ENCODE measurements at regions of chr19 and their contacts with region 1.

Region 1: GRCh38 chr19:33927789-33928457 is 131.3 kb downstream of the KCTD15 start:
- DNase-seq: peak; percentile 18
- ATAC-seq: peak; percentile 74
- H3K4me3 Mint-ChIP-seq: peak overlapping the region; percentile 44
- H3K27ac Mint-ChIP-seq: peak overlapping the region; percentile 95
- H3K4me1 Mint-ChIP-seq: peaks cover 42% of the 10 kb centered on the region
- H3K27me3 Mint-ChIP-seq: no peaks in the 10 kb centered on the region
- CTCF ChIP-seq: no peak

Region 2: DNA sequence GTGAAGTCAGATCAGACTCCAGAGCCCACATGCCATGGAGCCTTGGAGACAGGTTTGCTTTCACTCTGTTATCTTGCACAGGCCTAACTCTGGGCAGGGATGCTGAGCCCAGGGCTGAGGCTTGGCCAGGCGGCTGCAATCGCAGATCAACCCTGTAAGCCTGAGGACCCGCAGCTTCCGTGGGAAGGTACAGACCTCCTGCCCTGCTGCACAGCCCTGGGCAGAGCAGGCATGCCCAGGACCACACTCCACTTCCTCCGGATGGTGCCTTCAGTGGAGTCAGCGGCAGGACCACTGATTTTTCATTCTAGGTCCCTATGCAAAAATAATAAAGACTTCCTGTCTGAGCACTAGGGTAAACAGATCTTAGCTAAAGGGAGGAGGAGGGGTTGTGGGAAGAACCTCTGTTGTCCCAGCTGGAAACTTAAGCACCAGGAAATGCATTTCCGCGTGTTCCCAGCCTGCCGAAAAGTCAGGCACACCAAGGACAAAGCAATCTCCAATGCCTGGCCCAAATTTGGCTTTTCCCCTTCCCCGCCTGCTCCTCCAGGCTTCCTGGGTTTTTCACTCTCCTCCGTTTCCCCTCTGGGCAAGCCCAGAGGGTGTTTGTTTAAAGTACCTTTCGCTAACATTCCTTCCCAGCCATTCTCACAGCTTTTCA is 43.9 kb before region 1 on chr19:
- CTCF ChIA-PET with region 1: no interaction called
- POLR2A ChIA-PET with region 1: no interaction called
- DNase-seq: peak; percentile 56
- ATAC-seq: peak; percentile 79
- H3K4me3 Mint-ChIP-seq: peak overlapping the region; percentile 57
- H3K27ac Mint-ChIP-seq: peak overlapping the region; percentile 97
- H3K4me1 Mint-ChIP-seq: peaks cover 49% of the 10 kb centered on the region
- H3K27me3 Mint-ChIP-seq: no peaks in the 10 kb centered on the region
- CTCF ChIP-seq: no peak

Region 3: DNA sequence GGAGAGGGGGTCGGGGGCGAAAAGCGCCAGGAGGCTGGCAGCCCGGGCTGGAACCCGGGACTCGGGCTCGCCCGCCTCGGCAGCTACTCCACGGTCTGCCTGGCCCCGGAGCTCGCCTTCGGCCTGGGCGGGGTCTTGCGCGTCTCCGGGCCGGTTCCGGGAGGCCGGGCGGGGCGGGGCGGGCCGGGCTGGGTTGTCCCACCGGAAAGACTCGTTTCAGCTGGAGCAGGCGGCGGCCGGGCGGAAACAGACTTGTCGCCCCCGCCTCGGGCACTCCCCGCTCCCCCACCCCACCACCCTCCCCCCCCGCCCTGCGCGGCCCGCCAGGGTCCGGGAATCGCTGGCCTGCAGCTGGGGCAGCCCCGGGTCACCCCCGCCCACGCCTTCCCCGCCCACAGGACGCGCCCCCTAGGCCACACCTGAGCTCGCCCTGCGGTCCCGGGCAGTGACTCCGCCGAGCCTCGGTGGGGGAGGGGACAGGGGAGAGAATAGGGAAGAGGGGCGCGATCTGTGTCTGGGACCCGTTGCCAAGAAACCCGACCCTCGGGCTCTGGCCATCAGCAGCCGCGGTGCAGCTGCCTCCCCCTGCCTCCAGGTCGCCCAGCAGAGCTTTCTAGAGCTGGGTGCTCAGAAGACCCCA is 21.9 kb before region 1 on chr19:
- CTCF ChIA-PET with region 1: interaction called, 4 read pairs
- POLR2A ChIA-PET with region 1: interaction called, 14 read pairs
- DNase-seq: peak; percentile 84
- ATAC-seq: peak; percentile 72
- H3K4me3 Mint-ChIP-seq: peak overlapping the region; percentile 82
- H3K27ac Mint-ChIP-seq: peak overlapping the region; percentile 98; the same call in 1 of the 2 replicates
- H3K4me1 Mint-ChIP-seq: peaks cover 48% of the 10 kb centered on the region
- H3K27me3 Mint-ChIP-seq: peaks cover 7% of the 10 kb centered on the region
- CTCF ChIP-seq: no peak

Region 4: GRCh38 chr19:33916792-33917191 is 11.1 kb before region 1 on chr19:
- CTCF ChIA-PET with region 1: no interaction called
- POLR2A ChIA-PET with region 1: no interaction called
- DNase-seq: no peak
- ATAC-seq: no peak
- H3K4me3 Mint-ChIP-seq: no peak overlapping the region
- H3K27ac Mint-ChIP-seq: no peak overlapping the region
- H3K4me1 Mint-ChIP-seq: peaks cover 8% of the 10 kb centered on the region; the same call in 1 of the 2 replicates
- H3K27me3 Mint-ChIP-seq: no peaks in the 10 kb centered on the region
- CTCF ChIP-seq: no peak

Measured in WTC11 (cell line).